Sigmoid colon (tissue), 7 donors: ENCODE measurements at regions of chr7 and their contacts with region 1.

Region 1: DNA sequence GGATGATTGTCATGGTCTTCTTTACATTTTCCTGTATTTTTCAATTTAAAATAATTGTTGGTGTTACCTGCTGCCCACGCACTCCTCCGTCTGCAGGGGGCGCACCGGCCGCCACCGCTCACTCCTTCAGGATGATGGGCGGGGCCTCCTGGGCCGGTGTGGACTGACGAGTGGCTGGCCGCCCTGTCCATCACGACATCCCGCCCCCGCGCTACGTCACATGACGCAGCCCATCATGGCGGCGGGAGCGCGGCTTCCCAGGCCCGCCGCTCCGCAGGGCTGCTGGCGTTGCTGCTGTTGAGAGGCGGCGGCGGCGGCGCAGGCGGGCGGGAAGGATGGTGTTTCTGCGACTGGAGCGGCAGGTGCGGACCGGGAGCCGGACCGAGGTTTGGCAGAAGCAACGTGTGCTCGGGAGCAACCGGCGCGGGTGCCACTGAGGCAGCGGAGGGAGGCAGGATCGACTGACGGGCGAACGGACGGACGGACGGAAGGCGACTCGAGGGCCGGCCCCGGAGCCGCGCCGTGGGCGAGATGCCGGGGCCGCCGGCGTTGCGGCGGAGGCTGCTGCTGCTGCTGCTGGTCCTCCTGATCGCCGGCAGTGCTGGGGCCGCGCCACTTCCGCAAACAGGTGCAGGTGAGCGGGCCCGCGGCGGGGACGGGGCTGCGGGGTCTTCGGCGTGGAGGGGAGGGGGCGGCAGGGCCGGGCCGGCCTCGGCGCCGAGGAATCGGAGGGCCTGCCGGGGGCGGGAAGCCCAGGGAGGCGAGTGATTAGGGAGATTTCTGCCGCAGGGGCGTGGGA is at the start of gene LMTK2:
- DNase-seq: peak; percentile 97
- H3K4me3 ChIP-seq: peak within 1 kb of the TSS; percentile 87 to 100 (median 98)
- H3K27ac ChIP-seq: peak within 1 kb of the TSS; percentile 84 to 90 (median 87)
- H3K4me1 ChIP-seq: peaks cover 0 to 17% (median 6%) of the 10 kb centered on the region in 4 donors
- H3K27me3 ChIP-seq: no peaks in the 10 kb centered on the region
- CTCF ChIP-seq: peak; percentile 73 to 92 (median 83)
- EP300 ChIP-seq: no peak
- POLR2A ChIP-seq: peak; percentile 88 to 94
- total RNA-seq, gene LMTK2: 16.8 to 19.9 (median 18.0) TPM

Region 2: DNA sequence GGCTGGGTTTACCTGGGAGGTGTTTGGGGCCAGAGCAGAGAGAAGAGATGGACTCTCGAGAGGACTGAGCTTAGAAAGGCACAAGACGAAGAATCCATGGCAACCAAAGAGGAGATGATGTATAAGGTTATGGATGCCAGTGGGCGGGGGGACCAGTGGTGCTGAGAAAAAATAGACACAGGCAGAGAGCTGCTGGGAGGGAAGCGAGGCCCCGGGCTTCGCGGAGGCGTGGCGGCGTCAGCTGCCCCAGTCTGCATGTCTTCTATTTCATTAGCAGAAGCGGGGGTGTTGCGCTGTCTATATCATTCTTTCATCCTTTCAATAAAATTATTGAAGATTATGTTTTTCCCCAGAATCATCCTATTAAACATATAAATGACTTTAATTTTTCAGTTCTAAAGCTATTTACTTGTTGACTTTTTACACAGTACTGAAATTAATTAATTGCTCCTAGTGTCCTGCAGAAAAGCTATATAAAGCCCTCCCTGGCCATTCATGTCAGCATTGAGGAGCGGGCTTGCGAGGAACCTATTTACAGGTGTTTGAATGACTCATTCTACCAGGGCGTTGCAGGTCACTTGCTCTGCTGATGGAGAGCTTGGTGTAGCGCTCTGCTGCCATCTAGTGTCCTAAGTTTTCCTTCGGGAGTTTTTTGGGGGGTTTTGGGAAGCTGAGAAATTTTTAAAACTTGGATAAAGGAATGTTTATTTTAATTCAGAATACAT is 61.5 kb after region 1 on chr7:
- intact Hi-C with region 1: loop called (anchors 1 kb)
- DNase-seq: no peak
- H3K4me3 ChIP-seq: no peak overlapping the region
- H3K27ac ChIP-seq: no peak overlapping the region
- H3K4me1 ChIP-seq: peaks cover 0 to 15% (median 12%) of the 10 kb centered on the region in 4 donors
- H3K27me3 ChIP-seq: no peaks in the 10 kb centered on the region
- CTCF ChIP-seq: peak; percentile 55 to 83 (median 61)
- EP300 ChIP-seq: no peak
- POLR2A ChIP-seq: no peak

Region 3: GRCh38 chr7:98186452-98187137 is 79.7 kb after region 1 on chr7:
- intact Hi-C with region 1: no loop called
- DNase-seq: no peak
- H3K4me3 ChIP-seq: peak overlapping the region in 1 of 4 donors; percentile 13
- H3K27ac ChIP-seq: peak overlapping the region; percentile 43 to 83 (median 65)
- H3K4me1 ChIP-seq: peaks cover 0 to 18% (median 12%) of the 10 kb centered on the region in 4 donors
- H3K27me3 ChIP-seq: no peaks in the 10 kb centered on the region
- CTCF ChIP-seq: no peak
- EP300 ChIP-seq: no peak
- POLR2A ChIP-seq: no peak

Region 4: DNA sequence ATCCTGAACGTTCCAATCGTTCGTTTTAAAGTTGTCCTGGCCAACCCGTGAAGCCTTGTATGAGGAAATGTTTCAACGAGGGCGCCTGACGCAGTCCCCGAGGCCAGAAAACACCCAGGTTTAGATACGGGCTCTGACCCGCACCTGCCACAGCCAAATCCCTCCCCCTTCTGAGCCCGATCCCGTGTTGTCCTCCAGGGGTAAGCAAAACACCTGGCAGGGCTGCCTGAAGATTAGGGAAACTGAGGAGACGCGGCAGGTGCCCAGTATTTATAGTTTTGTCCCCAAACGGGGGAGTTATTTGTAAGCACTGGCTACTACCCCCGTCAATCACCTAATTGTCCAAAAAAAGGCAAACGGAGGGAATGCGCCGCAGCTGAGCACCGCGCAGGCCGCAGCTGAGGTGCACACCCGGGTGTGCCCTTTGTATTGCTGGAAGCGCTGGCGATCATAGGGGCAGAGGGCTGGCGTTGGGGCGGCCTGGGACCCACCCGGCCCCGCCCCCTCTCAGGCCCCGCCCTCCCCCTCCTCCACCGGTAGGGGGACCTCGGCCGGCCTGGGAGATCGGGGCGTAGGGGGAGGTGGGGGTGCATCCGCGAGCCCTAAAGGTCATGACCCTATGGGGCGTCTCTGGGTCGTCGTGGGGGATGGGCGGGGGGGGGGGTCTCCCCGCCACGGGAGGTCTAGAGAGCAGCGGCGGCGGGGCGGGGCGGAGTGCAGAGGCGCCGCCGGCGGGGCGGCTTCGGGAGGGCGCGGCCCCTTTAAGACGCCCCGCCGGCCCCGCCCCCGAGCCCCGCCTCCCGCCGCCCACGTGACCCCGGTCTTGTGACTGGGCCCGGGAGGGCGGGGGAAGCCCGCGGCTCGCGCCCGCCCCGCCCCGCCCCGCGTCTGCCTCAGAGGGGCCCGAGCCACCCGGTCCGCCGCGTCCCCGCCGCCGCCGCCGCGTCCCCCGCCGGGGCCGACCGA is 174.2 kb after region 1 on chr7 and contains the start of gene BRI3:
- intact Hi-C with region 1: loop called (anchors 5 kb)
- DNase-seq: peak; percentile 95
- H3K4me3 ChIP-seq: peak within 1 kb of the TSS; percentile 90 to 100 (median 100)
- H3K27ac ChIP-seq: peak within 1 kb of the TSS; percentile 95 to 97 (median 96)
- H3K4me1 ChIP-seq: peaks cover 0 to 59% (median 53%) of the 10 kb centered on the region in 4 donors
- H3K27me3 ChIP-seq: no peaks in the 10 kb centered on the region
- CTCF ChIP-seq: no peak
- EP300 ChIP-seq: no peak
- POLR2A ChIP-seq: peak; percentile 86 to 91
- total RNA-seq, gene BRI3: 44.9 to 61.8 (median 48.4) TPM

Region 5: GRCh38 chr7:98294796-98295382 is 188.0 kb after region 1 on chr7:
- intact Hi-C with region 1: no loop called
- DNase-seq: no peak
- H3K4me3 ChIP-seq: no peak overlapping the region
- H3K27ac ChIP-seq: no peak overlapping the region
- H3K4me1 ChIP-seq: peaks cover 0 to 17% (median 3%) of the 10 kb centered on the region in 4 donors
- H3K27me3 ChIP-seq: no peaks in the 10 kb centered on the region
- CTCF ChIP-seq: peak in 2 of 4 experiments; percentile 29 to 41
- EP300 ChIP-seq: no peak
- POLR2A ChIP-seq: no peak